Activated CD4-positive, alpha-beta T cell treated with anti-CD3 and anti-CD28 coated beads, Interleukin-2, amount 10 ng/mL, durations not matched to agents 7 days and 5 days (primary cell): ENCODE measurements at regions of chr12 and their contacts with region 1.

Region 1: GRCh38 chr12:50467439-50467838 is 37.3 kb upstream of the DIP2B start:
- DNase-seq: no peak
- H3K4me3 Mint-ChIP-seq: no peak overlapping the region
- H3K27ac Mint-ChIP-seq: no peak overlapping the region
- H3K4me1 Mint-ChIP-seq: no peaks in the 10 kb centered on the region
- H3K27me3 Mint-ChIP-seq: no peaks in the 10 kb centered on the region

Region 2: DNA sequence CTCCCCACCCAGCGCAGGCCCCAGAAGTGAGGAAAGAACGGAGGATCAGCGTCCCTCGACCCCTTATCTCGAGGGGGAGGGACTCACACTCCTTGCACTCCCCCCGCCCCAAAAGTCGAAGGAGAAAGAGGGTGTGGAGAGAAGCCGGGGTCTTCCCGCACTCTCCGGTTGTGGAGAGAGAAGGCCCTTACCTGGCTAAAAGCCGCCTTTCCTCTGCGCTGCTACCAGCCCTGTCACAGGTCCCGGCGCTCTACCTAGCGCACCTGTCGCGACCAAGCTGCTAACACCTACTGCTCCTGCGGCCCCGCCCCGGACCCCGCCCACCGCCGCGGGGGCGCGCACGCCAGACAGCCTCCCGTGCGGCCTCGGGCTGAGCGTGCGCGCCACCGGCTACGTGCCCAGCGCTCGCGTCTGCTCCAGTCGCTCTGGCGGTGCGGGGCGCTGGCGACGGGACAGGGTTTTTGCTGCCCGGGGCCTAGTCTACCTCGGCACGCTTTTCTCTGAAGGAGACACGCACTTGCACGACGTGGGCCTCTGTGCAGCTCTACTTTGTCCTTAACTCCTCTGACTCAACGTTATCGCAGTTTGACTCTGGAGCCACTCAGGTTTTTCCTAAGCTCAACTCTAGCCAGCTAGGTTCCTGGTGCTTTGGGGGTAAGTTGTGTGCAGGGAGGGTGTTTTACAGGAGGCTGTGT is 184.1 kb before region 1 on chr12 and contains the start of gene LIMA1:
- CTCF ChIA-PET with region 1: no interaction called
- POLR2A ChIA-PET with region 1: no interaction called
- DNase-seq: peak; percentile 92
- H3K4me3 Mint-ChIP-seq: peak within 1 kb of the TSS; percentile 87
- H3K27ac Mint-ChIP-seq: peak within 1 kb of the TSS; percentile 90
- H3K4me1 Mint-ChIP-seq: peaks cover 23% of the 10 kb centered on the region
- H3K27me3 Mint-ChIP-seq: peaks cover 11% of the 10 kb centered on the region
- total RNA-seq, gene LIMA1: 16.9 to 22.4 TPM

Region 3: DNA sequence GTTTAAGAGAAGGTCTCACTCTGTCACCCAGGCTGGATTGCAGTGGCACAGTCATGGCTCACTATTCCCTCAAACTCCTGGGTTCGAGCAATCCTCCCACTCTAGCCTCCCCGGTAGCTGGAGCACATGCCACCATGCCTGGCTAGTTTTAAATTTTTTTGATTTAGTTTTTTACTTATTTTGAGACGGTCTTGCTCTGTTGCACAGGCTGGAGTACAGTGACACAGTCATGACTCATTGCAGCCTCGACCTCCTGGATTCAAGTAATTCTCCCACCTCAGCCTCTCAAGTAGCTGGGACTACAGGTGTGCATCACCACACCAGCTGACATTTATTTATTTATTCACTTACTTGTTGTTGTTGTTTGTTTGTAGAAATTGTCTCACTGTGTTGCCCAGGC is 15.1 kb after region 1 on chr12:
- CTCF ChIA-PET with region 1: no interaction called
- POLR2A ChIA-PET with region 1: interaction called, 13 read pairs
- DNase-seq: no peak
- H3K4me3 Mint-ChIP-seq: no peak overlapping the region
- H3K27ac Mint-ChIP-seq: no peak overlapping the region
- H3K4me1 Mint-ChIP-seq: no peaks in the 10 kb centered on the region
- H3K27me3 Mint-ChIP-seq: no peaks in the 10 kb centered on the region

Region 4: GRCh38 chr12:50504798-50505385 is 37.5 kb after region 1 on chr12 and contains the start of gene DIP2B:
- CTCF ChIA-PET with region 1: no interaction called
- POLR2A ChIA-PET with region 1: no interaction called
- DNase-seq: peak; percentile 97
- H3K4me3 Mint-ChIP-seq: peak within 1 kb of the TSS; percentile 93
- H3K27ac Mint-ChIP-seq: peak within 1 kb of the TSS; percentile 94
- H3K4me1 Mint-ChIP-seq: peaks cover 45% of the 10 kb centered on the region
- H3K27me3 Mint-ChIP-seq: no peaks in the 10 kb centered on the region
- total RNA-seq, gene DIP2B: 28.9 to 30.4 TPM

Region 5: DNA sequence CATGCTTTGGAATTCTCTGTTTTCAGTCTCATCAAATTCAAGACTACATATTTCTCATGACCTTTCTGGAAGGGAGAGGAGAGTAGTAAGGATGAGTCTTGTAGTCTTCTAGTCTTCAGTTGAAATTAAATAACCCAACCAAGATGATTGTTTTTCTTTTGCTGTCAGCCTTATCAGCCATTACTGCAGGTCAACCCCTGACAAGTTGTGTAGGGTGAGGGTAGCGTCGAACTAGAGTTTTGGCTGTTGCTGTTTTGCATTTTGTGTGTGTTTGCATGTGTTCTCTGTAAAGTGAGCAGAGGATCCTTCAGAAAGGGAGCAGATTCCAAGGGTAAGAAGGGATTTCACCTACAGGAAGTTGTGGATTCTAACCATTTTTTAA is 65.8 kb after region 1 on chr12:
- CTCF ChIA-PET with region 1: no interaction called
- POLR2A ChIA-PET with region 1: no interaction called
- DNase-seq: no peak
- H3K4me3 Mint-ChIP-seq: no peak overlapping the region
- H3K27ac Mint-ChIP-seq: no peak overlapping the region
- H3K4me1 Mint-ChIP-seq: peaks cover 36% of the 10 kb centered on the region
- H3K27me3 Mint-ChIP-seq: no peaks in the 10 kb centered on the region

Region 6: GRCh38 chr12:50686406-50686805 is 219.0 kb after region 1 on chr12:
- CTCF ChIA-PET with region 1: no interaction called
- POLR2A ChIA-PET with region 1: interaction called, 12 read pairs
- DNase-seq: no peak
- H3K4me3 Mint-ChIP-seq: no peak overlapping the region
- H3K27ac Mint-ChIP-seq: no peak overlapping the region
- H3K4me1 Mint-ChIP-seq: peaks cover 5% of the 10 kb centered on the region
- H3K27me3 Mint-ChIP-seq: no peaks in the 10 kb centered on the region